ENCODE measurements at regions of chr20 and their contacts with region 1.

Region 1: DNA sequence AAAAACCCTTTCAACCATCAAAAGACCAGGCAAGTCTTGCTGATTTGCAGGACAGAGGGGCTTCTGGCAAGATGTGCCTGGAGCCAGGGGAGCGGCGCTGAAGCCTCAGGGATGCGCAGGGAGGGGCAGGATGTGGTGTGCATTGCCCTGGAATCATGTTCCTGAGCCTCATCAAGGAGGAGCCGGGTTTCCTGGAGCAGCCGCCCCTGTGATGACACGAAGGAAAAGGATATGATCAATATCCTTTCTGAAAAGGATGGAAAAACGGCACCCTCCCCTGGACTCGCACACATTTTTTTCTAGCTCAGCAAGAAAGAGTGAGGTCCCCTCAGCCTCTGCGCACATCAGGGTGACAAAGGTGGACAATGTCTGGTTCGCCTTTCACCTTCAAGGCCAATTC is 173.1 kb upstream of the SSTR4 start:
- DNase-seq: peak; percentile 74
- H3K4me3 ChIP-seq: no peak overlapping the region
- H3K27ac ChIP-seq: peak overlapping the region; percentile 78
- H3K4me1 ChIP-seq: peaks cover 33% of the 10 kb centered on the region
- H3K27me3 ChIP-seq: no peaks in the 10 kb centered on the region
- CTCF ChIP-seq: no peak
- POLR2A ChIP-seq: peak; percentile 47

Region 2: DNA sequence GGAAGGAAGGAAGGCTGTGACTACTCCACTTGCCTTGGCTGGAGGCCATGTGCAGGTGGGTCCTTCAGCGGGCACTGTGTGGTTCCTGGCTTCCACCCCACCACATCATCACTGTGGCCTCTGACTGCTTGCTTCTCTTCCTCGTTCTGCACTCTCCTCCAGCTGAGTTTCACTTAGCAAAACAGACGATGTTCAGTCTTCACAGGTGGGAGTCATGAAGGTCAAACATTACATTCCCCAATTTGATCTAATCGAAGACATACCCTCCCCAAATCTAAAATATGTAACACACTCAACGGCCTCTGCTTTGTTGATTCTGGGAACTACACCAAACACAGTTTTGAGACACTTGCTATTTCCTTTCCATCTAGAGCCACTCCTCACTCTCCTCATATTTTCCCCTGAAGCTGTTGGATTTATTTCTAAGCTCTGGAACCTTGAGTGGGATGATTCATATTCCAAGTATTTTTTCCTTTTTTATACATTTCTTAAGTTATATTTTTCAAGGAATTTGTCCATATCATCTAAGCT is 145.1 kb before region 1 on chr20:
- CTCF ChIA-PET with region 1: interaction called, 4 read pairs
- POLR2A ChIA-PET with region 1: no interaction called
- dilution Hi-C with region 1: no loop called
- intact Hi-C with region 1: loop called (anchors 5 kb)
- DNase-seq: peak; percentile 68
- H3K4me3 ChIP-seq: no peak overlapping the region
- H3K27ac ChIP-seq: peak overlapping the region; percentile 59
- H3K4me1 ChIP-seq: peaks cover 39% of the 10 kb centered on the region
- H3K27me3 ChIP-seq: no peaks in the 10 kb centered on the region
- CTCF ChIP-seq: no peak
- POLR2A ChIP-seq: no peak

Region 3: GRCh38 chr20:22846863-22847262 is 15.1 kb before region 1 on chr20:
- CTCF ChIA-PET with region 1: interaction called, 47 read pairs
- POLR2A ChIA-PET with region 1: no interaction called
- dilution Hi-C with region 1: no loop called
- intact Hi-C with region 1: no loop called
- DNase-seq: no peak
- H3K4me3 ChIP-seq: no peak overlapping the region
- H3K27ac ChIP-seq: no peak overlapping the region
- H3K4me1 ChIP-seq: peaks cover 4% of the 10 kb centered on the region
- H3K27me3 ChIP-seq: peaks cover 1 to 5% of the 10 kb centered on the region in 2 experiments
- CTCF ChIP-seq: no peak
- POLR2A ChIP-seq: no peak

Region 4: GRCh38 chr20:22995923-22996322 is 133.9 kb after region 1 on chr20:
- CTCF ChIA-PET with region 1: no interaction called
- POLR2A ChIA-PET with region 1: no interaction called
- dilution Hi-C with region 1: no loop called
- intact Hi-C with region 1: no loop called
- DNase-seq: no peak
- H3K4me3 ChIP-seq: no peak overlapping the region
- H3K27ac ChIP-seq: no peak overlapping the region
- H3K4me1 ChIP-seq: no peaks in the 10 kb centered on the region
- H3K27me3 ChIP-seq: no peaks in the 10 kb centered on the region
- CTCF ChIP-seq: no peak
- POLR2A ChIP-seq: no peak

Region 5: DNA sequence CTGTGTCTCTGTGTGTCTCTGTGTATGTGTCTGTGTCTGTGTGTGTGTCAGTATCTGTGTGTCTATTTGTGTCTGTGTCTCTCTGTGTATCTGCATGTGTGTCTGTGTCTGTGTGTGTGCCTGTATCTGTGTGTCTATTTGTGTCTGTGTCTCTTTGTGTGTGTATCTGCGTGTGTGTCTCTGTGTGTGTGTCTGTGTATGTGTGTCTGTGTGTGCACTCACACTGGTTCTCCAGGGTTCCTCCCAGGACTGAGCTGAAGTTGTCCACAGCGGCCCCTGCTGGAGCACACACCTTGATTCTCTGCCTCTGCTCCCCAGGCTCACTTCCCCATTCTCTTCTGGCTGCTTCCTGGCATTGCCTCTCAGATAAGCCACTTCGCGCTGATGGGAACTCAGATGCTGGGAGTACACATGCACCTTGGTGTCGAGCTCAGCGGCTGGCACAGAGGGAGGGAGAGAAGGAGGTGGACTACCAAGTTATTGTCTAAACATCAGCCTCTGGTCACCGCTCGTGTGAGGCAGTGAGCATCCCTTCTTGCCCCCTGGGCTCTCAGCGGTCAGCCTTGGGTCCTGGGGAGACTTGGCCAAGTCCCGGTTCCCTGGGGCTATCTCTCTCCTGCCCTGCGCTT is 383.7 kb after region 1 on chr20:
- CTCF ChIA-PET with region 1: no interaction called
- POLR2A ChIA-PET with region 1: no interaction called
- dilution Hi-C with region 1: no loop called
- intact Hi-C with region 1: loop called (anchors 5 kb)
- DNase-seq: peak; percentile 77
- H3K4me3 ChIP-seq: no peak overlapping the region
- H3K27ac ChIP-seq: no peak overlapping the region
- H3K4me1 ChIP-seq: no peaks in the 10 kb centered on the region
- H3K27me3 ChIP-seq: no peaks in the 10 kb centered on the region
- CTCF ChIP-seq: peak; percentile 67 to 88
- POLR2A ChIP-seq: no peak

Measured in endothelial cell of umbilical vein (primary cell).